ENCODE measurements at regions of chr13 and their contacts with region 1.

Region 1: GRCh38 chr13:51286135-51287002 is 53.1 kb upstream of the SERPINE3 start:
- DNase-seq: peak; percentile 66 to 95 (median 82)
- ATAC-seq: peak; percentile 76 to 92 (median 90)
- H3K4me3 ChIP-seq: no peak overlapping the region
- H3K27ac ChIP-seq: no peak overlapping the region
- H3K4me1 ChIP-seq: peaks cover 5 to 10% (median 9%) of the 10 kb centered on the region in 3 donors
- H3K27me3 ChIP-seq: no peaks in the 10 kb centered on the region
- CTCF ChIP-seq: peak; percentile 80 to 93 (median 90)

Region 2: GRCh38 chr13:51125498-51126226 is 160.7 kb before region 1 on chr13:
- intact Hi-C with region 1: loop called in 1 of 3 experiments (anchors 5 kb)
- DNase-seq: peak in 5 of 6 donors; percentile 29 to 79 (median 56)
- ATAC-seq: peak; percentile 91 to 95 (median 94)
- H3K4me3 ChIP-seq: no peak overlapping the region
- H3K27ac ChIP-seq: no peak overlapping the region
- H3K4me1 ChIP-seq: peaks cover 0 to 7% (median 0%) of the 10 kb centered on the region in 3 donors
- H3K27me3 ChIP-seq: no peaks in the 10 kb centered on the region
- CTCF ChIP-seq: peak; percentile 28 to 66 (median 54)

Region 3: GRCh38 chr13:51148952-51149573 is 137.3 kb before region 1 on chr13:
- intact Hi-C with region 1: loop called in 2 of 3 experiments (anchors 5 to 10 kb)
- DNase-seq: peak in 2 of 6 donors; percentile 16 to 49
- ATAC-seq: peak in 3 of 4 donors; percentile 82 to 83 (median 82)
- H3K4me3 ChIP-seq: no peak overlapping the region
- H3K27ac ChIP-seq: no peak overlapping the region
- H3K4me1 ChIP-seq: no peaks in the 10 kb centered on the region
- H3K27me3 ChIP-seq: no peaks in the 10 kb centered on the region
- CTCF ChIP-seq: peak in 3 of 4 donors; percentile 23 to 41 (median 27)

Region 4: DNA sequence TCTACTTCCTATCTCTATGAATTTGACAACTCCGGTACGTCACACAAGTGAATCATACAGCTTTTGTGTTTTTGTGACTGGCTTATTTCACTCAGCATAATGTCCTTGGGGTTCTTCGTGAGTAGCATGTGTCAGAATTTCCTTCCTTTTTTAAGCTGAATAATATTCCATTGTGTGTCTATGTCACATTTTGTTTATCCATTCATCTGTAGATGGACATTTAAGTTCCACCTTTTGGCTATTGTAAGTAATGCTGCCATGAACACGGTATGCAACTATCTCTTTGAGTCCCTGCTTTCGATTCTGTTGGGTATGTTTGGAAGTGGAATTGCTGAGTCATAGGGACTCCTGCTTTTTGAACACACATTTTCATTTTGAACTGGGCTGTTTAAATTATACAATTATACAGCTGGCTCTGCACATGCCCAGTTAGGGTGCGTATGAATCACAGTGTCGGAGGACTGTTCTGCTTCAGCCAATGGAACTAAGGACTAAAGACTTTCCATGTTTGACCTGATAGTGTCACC is 132.3 kb before region 1 on chr13:
- intact Hi-C with region 1: loop called in 2 of 3 experiments (anchors 5 to 10 kb)
- DNase-seq: no peak
- ATAC-seq: peak in 1 of 4 donors; percentile 42
- H3K4me3 ChIP-seq: no peak overlapping the region
- H3K27ac ChIP-seq: no peak overlapping the region
- H3K4me1 ChIP-seq: no peaks in the 10 kb centered on the region
- H3K27me3 ChIP-seq: no peaks in the 10 kb centered on the region
- CTCF ChIP-seq: no peak

Region 5: DNA sequence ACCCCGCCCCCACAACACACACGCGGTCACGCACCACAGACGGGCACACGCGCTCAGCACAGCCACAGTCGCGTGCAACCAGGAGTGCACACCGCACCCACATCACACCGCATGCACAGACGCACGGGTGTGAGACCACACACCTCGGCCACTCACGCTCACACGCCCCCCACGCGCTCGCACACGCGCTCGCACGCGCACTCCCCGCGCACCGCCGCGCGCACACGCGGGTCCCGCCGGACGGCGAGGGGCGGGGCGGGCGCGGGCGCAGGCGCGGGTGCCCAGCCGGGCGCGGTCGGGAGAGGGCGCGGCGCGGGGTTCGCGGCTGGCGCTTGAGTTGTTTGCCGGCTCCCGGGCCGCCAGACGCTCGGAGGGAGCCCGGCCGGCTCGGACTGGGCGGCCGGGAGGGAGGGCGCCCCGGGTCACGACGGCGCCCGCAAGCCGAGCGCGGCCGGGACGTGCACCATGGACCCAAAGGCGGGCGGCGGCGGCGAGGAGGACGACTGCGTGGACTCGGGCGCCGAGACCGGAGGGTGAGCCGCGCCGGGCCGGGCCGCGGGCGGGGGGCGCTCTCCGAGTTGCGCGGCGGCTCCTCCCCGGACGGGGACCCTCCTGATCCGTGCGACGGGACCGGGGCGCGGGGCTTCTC is 64.2 kb before region 1 on chr13 and contains the start of gene FAM124A:
- intact Hi-C with region 1: loop called in 1 of 3 experiments (anchors 10 kb)
- DNase-seq: peak; percentile 30 to 89 (median 60)
- ATAC-seq: peak; percentile 85 to 97 (median 92)
- H3K4me3 ChIP-seq: peak within 1 kb of the TSS; percentile 43 to 61 (median 50)
- H3K27ac ChIP-seq: no peak within 1 kb of the TSS
- H3K4me1 ChIP-seq: peaks cover 0 to 3% (median 0%) of the 10 kb centered on the region in 3 donors
- H3K27me3 ChIP-seq: no peaks in the 10 kb centered on the region
- CTCF ChIP-seq: no peak
- total RNA-seq, gene FAM124A: 0.47 to 1.6 (median 0.65) TPM

Region 6: GRCh38 chr13:51435002-51435578 is 148.7 kb after region 1 on chr13:
- intact Hi-C with region 1: no loop called
- DNase-seq: no peak
- ATAC-seq: peak; percentile 39 to 69 (median 56)
- H3K4me3 ChIP-seq: no peak overlapping the region
- H3K27ac ChIP-seq: no peak overlapping the region
- H3K4me1 ChIP-seq: peaks cover 19 to 29% (median 20%) of the 10 kb centered on the region in 3 donors
- H3K27me3 ChIP-seq: no peaks in the 10 kb centered on the region
- CTCF ChIP-seq: peak in 3 of 4 donors; percentile 26 to 35 (median 32)